Activated B cell treated with CpG ODN at 0.5 μM for 24 hours (primary cell): ENCODE measurements at regions of chr19 and their contacts with region 1.

Region 1: DNA sequence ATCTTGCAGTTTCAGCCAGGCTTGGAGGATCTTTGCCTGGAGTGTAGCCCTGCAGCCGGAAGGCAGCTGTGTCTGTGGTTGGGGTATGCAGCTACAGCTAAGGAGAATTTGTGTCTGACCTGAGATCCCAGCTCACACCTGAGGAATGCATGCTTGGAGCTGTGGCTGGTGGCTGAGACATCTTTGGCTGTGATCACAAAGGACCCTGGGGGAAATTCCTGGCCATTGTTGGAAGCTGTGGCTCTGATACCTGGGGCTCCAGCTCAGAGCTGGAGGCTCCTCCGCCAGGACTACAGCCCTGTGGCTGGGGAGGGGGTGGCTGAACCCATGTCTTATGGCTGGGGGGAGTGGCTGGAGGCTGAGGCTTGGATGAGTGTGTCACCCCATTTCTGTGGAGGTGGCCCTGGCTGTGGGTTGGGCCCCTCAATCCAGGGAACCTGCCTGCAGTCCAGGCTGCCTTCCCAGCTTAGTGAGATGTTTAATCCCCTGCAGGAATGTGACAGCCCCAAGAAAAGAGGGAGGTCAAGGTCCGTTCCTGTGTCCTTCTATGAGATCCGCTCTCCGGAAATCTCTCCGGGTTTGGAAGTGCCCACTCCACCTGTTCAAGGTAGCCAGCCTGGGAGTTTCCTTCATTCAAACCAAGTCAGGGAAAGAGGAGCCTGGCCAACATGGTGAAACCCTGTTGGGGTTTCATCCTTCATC is 27.6 kb downstream of the ARHGEF18 start:
- DNase-seq: no peak
- ATAC-seq: no peak
- H3K4me3 Mint-ChIP-seq: no peak overlapping the region
- H3K27ac Mint-ChIP-seq: peak overlapping the region; percentile 41
- H3K4me1 Mint-ChIP-seq: peaks cover 8% of the 10 kb centered on the region
- H3K27me3 Mint-ChIP-seq: no peaks in the 10 kb centered on the region
- CTCF ChIP-seq: no peak

Region 2: DNA sequence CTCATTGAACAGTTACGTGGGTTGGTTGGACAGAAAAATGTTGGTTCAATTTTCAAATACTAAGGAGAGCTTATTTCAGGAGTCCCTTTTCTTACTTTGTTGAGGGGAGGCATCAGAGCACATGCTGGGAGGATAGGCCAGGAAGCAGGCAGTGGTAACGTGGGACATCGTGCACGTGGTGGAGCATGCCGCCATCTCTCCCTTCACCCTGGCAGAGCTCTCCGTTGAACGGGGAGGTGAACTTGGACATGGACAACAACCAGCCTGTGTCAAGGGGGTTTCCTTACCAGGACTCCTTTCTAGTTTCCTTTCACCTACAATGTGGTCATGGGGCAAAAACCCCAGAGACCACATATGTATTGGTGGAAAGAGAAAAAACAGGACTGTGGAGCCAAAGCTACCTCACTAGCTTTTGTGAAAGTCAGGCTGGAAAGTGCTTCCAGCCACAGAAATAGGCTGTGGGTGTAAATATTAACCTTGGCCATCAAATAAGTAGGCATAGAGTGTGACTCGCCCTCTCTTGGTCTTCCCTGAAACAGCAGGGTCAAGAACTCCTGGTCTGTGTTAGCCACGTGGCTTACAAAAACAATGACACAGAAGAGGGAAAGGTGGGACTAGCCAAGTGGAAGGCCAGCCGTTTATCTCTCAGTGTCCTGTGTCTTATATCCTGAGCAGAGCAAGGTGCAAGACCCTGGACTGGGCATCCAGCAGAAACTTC is 1710.3 kb before region 1 on chr19:
- CTCF ChIA-PET with region 1: no interaction called
- POLR2A ChIA-PET with region 1: interaction called, 13 read pairs
- intact Hi-C with region 1: no loop called
- DNase-seq: no peak
- ATAC-seq: no peak
- H3K4me3 Mint-ChIP-seq: no peak overlapping the region
- H3K27ac Mint-ChIP-seq: peak overlapping the region; percentile 41
- H3K4me1 Mint-ChIP-seq: no peaks in the 10 kb centered on the region
- H3K27me3 Mint-ChIP-seq: no peaks in the 10 kb centered on the region
- CTCF ChIP-seq: no peak

Region 3: DNA sequence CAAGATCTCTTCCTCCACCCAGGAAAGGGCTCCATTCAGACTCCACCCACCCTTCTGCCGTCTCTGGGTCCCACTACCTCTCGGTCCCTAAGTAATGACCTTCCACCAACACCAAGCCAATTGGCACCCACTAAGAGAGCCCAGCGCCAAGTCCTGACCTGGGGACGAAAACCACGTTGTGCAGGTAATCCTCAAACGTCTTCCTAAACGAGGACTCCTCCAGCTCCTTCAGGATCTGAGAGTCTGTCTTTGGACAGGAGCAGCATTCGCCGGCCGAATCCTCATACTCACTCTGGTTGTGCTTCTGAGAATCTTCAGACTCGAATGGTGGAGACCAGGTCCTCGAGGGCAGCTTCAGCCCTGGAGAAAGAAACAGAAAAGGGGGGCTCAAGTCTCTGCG is 223.7 kb before region 1 on chr19:
- CTCF ChIA-PET with region 1: interaction called, 7 read pairs
- POLR2A ChIA-PET with region 1: no interaction called
- intact Hi-C with region 1: loop called (anchors 1 kb)
- DNase-seq: no peak
- ATAC-seq: no peak
- H3K4me3 Mint-ChIP-seq: no peak overlapping the region
- H3K27ac Mint-ChIP-seq: no peak overlapping the region
- H3K4me1 Mint-ChIP-seq: peaks cover 5% of the 10 kb centered on the region
- H3K27me3 Mint-ChIP-seq: no peaks in the 10 kb centered on the region
- CTCF ChIP-seq: no peak

Region 4: GRCh38 chr19:7257148-7258034 is 118.9 kb before region 1 on chr19:
- CTCF ChIA-PET with region 1: no interaction called
- POLR2A ChIA-PET with region 1: no interaction called
- intact Hi-C with region 1: no loop called
- DNase-seq: no peak
- ATAC-seq: no peak
- H3K4me3 Mint-ChIP-seq: no peak overlapping the region
- H3K27ac Mint-ChIP-seq: no peak overlapping the region
- H3K4me1 Mint-ChIP-seq: no peaks in the 10 kb centered on the region
- H3K27me3 Mint-ChIP-seq: no peaks in the 10 kb centered on the region
- CTCF ChIP-seq: no peak

Region 5: GRCh38 chr19:7386308-7386707 is 10.0 kb after region 1 on chr19:
- CTCF ChIA-PET with region 1: no interaction called
- POLR2A ChIA-PET with region 1: no interaction called
- intact Hi-C with region 1: no loop called
- DNase-seq: no peak
- ATAC-seq: no peak
- H3K4me3 Mint-ChIP-seq: no peak overlapping the region
- H3K27ac Mint-ChIP-seq: peak overlapping the region; percentile 92
- H3K4me1 Mint-ChIP-seq: peaks cover 23% of the 10 kb centered on the region
- H3K27me3 Mint-ChIP-seq: no peaks in the 10 kb centered on the region
- CTCF ChIP-seq: no peak

Region 6: DNA sequence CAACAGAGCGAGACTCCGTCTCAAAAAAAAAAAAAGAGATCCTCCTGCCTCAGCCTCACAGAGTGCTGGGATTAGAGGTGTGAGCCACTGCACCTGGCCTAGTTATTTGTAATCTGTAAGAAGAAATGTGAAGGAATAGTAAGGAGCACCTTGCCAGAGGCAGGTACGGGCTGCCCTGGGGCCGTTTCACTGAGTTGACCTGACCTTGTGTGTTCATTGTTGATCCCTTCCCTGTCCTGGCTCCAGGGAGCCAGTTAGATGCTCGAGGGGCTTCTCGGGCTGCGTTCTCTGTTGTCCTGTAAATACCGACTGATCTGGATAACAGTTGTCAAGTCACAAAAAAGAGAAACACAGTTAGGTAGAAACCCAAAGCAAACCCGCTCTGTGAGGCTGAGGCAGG is 27.7 kb after region 1 on chr19:
- CTCF ChIA-PET with region 1: no interaction called
- POLR2A ChIA-PET with region 1: no interaction called
- intact Hi-C with region 1: no loop called
- DNase-seq: no peak
- ATAC-seq: no peak
- H3K4me3 Mint-ChIP-seq: no peak overlapping the region
- H3K27ac Mint-ChIP-seq: no peak overlapping the region
- H3K4me1 Mint-ChIP-seq: peaks cover 31% of the 10 kb centered on the region
- H3K27me3 Mint-ChIP-seq: no peaks in the 10 kb centered on the region
- CTCF ChIP-seq: no peak

Region 7: DNA sequence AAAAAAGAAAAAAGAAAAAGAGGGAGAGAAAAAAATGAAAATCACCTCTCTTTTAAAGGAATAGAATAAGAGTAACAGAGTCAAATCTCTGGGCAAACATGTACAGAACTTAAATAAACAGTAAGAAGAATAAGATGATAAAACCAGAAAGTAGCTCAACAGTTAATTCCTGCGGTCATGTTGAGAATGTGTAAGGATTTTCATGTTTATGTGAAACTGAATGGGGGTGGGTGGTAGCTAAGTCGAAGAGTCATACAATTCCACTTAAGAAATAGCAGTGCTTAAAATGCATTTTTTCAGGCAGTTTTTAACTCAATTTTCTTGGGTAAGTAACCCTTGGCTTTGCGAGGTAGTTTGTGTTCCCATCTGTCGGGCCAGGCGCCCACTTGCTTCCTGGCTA is 51.6 kb after region 1 on chr19:
- CTCF ChIA-PET with region 1: no interaction called
- POLR2A ChIA-PET with region 1: no interaction called
- intact Hi-C with region 1: no loop called
- DNase-seq: no peak
- ATAC-seq: no peak
- H3K4me3 Mint-ChIP-seq: no peak overlapping the region
- H3K27ac Mint-ChIP-seq: peak overlapping the region; percentile 22
- H3K4me1 Mint-ChIP-seq: no peaks in the 10 kb centered on the region
- H3K27me3 Mint-ChIP-seq: no peaks in the 10 kb centered on the region
- CTCF ChIP-seq: no peak